ENCODE measurements at regions of chr7 and their contacts with region 1.

Region 1: GRCh38 chr7:2529161-2530070 is 9.8 kb downstream of the LFNG start:
- DNase-seq: peak; percentile 87
- H3K4me3 Mint-ChIP-seq: peak overlapping the region; percentile 68
- H3K27ac Mint-ChIP-seq: peak overlapping the region; percentile 95
- H3K4me1 Mint-ChIP-seq: peaks cover 49% of the 10 kb centered on the region
- H3K27me3 Mint-ChIP-seq: no peaks in the 10 kb centered on the region

Region 2: DNA sequence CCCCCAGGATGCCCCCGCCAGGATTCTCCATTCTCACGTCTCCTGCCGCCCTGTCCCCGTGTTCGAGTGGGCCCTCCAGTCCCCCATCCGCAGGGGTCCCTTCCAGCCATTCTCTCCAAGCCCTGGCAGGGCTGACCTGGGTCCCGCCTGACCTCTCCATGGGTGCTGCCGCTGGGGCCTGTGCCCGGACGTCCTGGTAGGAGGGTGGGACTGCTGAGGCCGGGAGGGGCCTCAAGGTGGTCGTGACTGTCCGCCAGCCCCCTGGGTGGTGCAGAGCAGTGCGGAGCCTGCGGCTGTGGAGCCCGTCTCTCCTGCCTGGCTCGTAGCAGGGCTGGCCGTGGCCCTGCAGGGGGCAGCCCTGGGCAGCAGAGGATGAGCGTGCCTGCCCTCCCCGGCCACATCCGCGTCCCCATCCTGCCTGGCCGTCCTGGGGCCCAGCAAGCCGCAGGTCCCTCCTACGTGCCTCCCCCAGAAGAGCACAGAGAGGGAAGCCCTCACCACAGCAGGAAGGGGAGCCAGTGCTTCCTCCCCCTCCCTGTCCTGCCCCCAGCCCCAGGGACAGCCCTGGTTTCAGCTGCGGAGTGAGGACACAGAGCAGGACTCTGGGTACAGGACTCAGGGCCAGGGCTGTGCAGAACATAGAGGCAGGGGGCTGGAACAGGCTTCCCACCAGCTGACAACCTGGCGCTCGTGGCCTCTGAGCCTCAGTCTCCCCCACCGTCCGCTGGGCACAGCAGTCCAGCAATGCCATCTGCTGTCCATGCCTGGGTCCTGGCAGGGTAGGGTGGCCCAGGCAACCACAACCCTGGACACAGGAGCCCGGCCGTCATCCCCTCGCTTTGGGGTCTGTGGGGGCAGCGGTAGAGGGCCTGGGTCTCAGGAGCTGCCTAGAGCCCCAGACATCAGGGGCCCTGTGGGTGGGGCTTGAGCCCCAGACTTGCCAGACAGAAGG is 51.7 kb before region 1 on chr7:
- CTCF ChIA-PET with region 1: interaction called, 4 read pairs
- intact Hi-C with region 1: loop called (anchors 5 kb)
- DNase-seq: peak; percentile 68
- H3K4me3 Mint-ChIP-seq: no peak overlapping the region
- H3K27ac Mint-ChIP-seq: no peak overlapping the region
- H3K4me1 Mint-ChIP-seq: no peaks in the 10 kb centered on the region
- H3K27me3 Mint-ChIP-seq: no peaks in the 10 kb centered on the region

Region 3: GRCh38 chr7:2508327-2509215 is 20.8 kb before region 1 on chr7:
- CTCF ChIA-PET with region 1: interaction called, 5 read pairs
- intact Hi-C with region 1: loop called (anchors 1 kb)
- DNase-seq: peak; percentile 83
- H3K4me3 Mint-ChIP-seq: peak overlapping the region; percentile 59
- H3K27ac Mint-ChIP-seq: peak overlapping the region; percentile 37
- H3K4me1 Mint-ChIP-seq: peaks cover 55% of the 10 kb centered on the region
- H3K27me3 Mint-ChIP-seq: no peaks in the 10 kb centered on the region

Region 4: GRCh38 chr7:2632733-2633537 is 103.5 kb after region 1 on chr7:
- CTCF ChIA-PET with region 1: no interaction called
- intact Hi-C with region 1: loop called (anchors 2 kb)
- DNase-seq: peak; percentile 67
- H3K4me3 Mint-ChIP-seq: peak overlapping the region; percentile 92
- H3K27ac Mint-ChIP-seq: peak overlapping the region; percentile 53
- H3K4me1 Mint-ChIP-seq: peaks cover 15% of the 10 kb centered on the region
- H3K27me3 Mint-ChIP-seq: no peaks in the 10 kb centered on the region

Measured in activated naive CD4-positive, alpha-beta T cell treated with anti-CD3 and anti-CD28 coated beads for 36 hours (primary cell).